Activated CD4-positive, alpha-beta memory T cell treated with anti-CD3 and anti-CD28 coated beads, Interleukin-2, amount 10 ng/mL, durations not matched to agents 7 days and 5 days (primary cell): ENCODE measurements at regions of chr9 and their contacts with region 1.

Region 1: DNA sequence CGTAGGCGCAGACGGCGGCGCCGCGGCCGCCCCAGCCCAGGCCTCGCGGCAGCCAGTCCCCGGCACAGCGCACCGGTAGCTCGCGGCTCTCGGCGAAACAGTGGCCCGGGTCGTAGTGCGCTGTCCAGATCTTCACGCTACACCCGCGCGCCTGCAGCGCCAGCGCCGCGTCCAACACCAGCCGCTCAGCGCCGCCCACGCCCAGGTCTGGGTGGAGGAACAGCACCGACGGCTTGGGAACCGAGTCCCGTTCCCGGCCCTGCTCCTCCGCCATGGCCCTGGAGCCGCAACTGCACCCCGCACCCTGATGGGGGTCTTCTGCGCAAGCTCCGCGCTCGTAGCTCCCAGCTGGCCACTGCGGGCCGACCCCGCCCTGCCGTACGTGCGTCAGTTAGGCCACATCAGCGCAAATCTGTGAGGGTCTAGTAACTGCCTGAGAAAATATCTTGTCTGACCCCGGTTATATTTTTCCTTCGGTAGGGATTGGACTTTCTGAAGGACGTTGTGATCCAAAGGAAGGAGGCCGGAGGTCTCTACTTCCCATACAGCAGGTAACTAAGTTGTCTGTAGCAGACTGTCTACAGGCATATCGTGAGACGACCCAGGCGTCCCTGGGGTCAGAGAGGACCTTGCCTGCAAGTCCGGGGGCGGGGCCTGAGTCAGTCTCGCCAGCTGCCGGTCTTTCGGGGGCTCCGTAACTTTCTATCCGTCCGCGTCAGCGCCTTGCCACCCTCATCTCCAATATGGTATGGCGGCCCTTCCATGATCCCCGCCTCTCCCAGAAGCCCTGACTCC is at the starts of genes ALG2 and SEC61B:
- DNase-seq: peak; percentile 93
- H3K4me3 Mint-ChIP-seq: peak within 1 kb of the TSS; percentile 98
- H3K27ac Mint-ChIP-seq: peak within 1 kb of the TSS; percentile 97
- H3K4me1 Mint-ChIP-seq: peaks cover 66% of the 10 kb centered on the region
- H3K27me3 Mint-ChIP-seq: no peaks in the 10 kb centered on the region
- total RNA-seq, gene ALG2: 30.0 to 31.9 TPM
- total RNA-seq, gene SEC61B: 148 to 165 TPM

Region 2: GRCh38 chr9:99253772-99254431 is 32.1 kb after region 1 on chr9:
- CTCF ChIA-PET with region 1: interaction called, 6 read pairs
- POLR2A ChIA-PET with region 1: interaction called, 27 read pairs
- DNase-seq: peak; percentile 78
- H3K4me3 Mint-ChIP-seq: peak overlapping the region; percentile 49
- H3K27ac Mint-ChIP-seq: peak overlapping the region; percentile 65
- H3K4me1 Mint-ChIP-seq: peaks cover 32% of the 10 kb centered on the region
- H3K27me3 Mint-ChIP-seq: no peaks in the 10 kb centered on the region

Region 3: DNA sequence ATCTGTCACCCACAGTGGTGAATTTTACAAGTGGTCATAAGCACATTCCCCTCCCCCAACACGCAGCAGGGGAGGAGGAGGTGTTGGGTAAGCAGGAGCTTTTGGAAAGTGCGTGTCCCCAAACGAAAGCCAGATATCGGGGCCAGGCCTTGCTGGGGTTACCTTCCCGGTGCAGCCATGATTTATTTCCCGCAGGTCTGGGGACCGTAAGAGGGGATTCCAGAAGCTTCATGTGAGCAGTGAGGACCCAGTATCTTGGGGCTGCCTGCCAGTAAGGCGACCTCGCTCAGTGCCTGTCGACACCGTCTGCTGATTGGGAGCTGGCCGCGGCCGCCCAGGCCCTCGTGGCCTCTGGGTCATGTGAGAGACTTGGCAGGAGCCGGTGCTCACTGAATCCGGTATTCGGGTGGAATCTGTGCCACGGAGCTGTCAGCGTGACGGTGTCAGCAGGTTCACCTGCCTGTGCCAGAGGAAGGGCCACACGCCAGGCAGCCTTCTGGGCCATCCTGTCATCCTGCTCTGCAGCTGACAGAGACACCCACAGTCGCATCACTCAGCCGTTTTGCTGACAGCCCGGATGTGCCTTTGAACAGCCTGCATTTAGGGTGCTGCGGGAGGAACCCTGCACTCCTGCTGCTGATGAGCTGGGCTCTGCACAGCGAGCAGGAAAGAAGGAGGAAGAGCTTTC is 37.6 kb after region 1 on chr9:
- CTCF ChIA-PET with region 1: interaction called, 6 read pairs
- POLR2A ChIA-PET with region 1: interaction called, 27 read pairs
- DNase-seq: peak; percentile 67
- H3K4me3 Mint-ChIP-seq: no peak overlapping the region
- H3K27ac Mint-ChIP-seq: peak overlapping the region; percentile 75
- H3K4me1 Mint-ChIP-seq: peaks cover 15% of the 10 kb centered on the region
- H3K27me3 Mint-ChIP-seq: no peaks in the 10 kb centered on the region

Region 4: GRCh38 chr9:99465231-99465907 is 243.6 kb after region 1 on chr9:
- CTCF ChIA-PET with region 1: no interaction called
- POLR2A ChIA-PET with region 1: no interaction called
- DNase-seq: no peak
- H3K4me3 Mint-ChIP-seq: no peak overlapping the region
- H3K27ac Mint-ChIP-seq: no peak overlapping the region
- H3K4me1 Mint-ChIP-seq: no peaks in the 10 kb centered on the region
- H3K27me3 Mint-ChIP-seq: peaks cover 10% of the 10 kb centered on the region